Activated CD8-positive, alpha-beta memory T cell treated with anti-CD3 and anti-CD28 coated beads, Interleukin-2, amount 10 ng/mL, durations not matched to agents 7 days and 5 days (primary cell): ENCODE measurements at regions of chr10 and their contacts with region 1.

Region 1: GRCh38 chr10:67849331-67850011 is 11.5 kb upstream of the DNAJC12 start:
- DNase-seq: peak; percentile 98
- ATAC-seq: peak; percentile 99
- H3K4me3 Mint-ChIP-seq: peak overlapping the region; percentile 91
- H3K27ac Mint-ChIP-seq: peak overlapping the region; percentile 97
- H3K4me1 Mint-ChIP-seq: peaks cover 11% of the 10 kb centered on the region
- H3K27me3 Mint-ChIP-seq: no peaks in the 10 kb centered on the region

Region 2: DNA sequence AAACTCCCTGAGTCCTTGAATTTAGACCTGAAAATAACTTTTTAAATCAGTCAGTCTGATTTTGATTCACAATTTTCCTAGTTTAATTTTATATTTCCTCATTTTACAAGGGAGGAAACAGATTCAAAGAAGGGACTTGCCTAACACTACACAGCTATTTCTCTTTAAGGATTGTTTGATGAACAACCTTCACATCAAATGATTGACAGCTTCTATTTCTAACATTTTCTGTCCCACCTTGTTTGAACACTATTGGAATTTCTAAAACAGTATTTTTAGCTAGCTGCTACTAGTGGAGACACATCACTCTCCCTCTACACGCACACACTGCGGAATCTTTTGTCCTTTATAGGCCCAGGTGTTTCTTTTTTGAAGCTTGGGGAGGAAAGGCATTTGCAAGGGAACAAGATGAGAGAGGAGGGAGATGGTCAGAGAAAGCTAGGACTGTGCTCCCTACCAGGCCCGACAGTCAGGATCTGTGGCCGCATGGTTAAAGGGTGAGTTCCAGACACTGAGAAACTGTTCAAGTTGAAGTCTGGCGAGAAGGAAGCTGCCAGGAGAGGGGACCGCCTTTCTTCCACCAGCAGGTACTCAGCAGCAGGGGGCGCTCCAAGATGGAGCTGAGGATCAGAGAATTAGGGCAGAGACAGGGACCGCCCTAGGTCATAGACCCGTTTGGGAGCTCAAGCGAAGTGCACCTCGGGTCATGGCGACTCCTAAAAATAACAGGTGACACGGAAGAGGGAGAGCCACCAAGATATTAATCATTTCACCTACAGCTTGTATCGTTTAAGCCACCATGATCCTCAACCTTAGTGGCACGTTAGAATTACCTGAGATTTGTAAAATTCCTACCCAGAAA is 61.2 kb before region 1 on chr10:
- CTCF ChIA-PET with region 1: interaction called, 37 read pairs
- DNase-seq: peak; percentile 87
- ATAC-seq: peak; percentile 67
- H3K4me3 Mint-ChIP-seq: peak overlapping the region; percentile 5
- H3K27ac Mint-ChIP-seq: peak overlapping the region; percentile 1
- H3K4me1 Mint-ChIP-seq: peaks cover 55% of the 10 kb centered on the region
- H3K27me3 Mint-ChIP-seq: no peaks in the 10 kb centered on the region

Region 3: GRCh38 chr10:67818320-67818719 is 31.2 kb before region 1 on chr10:
- CTCF ChIA-PET with region 1: no interaction called
- DNase-seq: no peak
- ATAC-seq: no peak
- H3K4me3 Mint-ChIP-seq: no peak overlapping the region
- H3K27ac Mint-ChIP-seq: no peak overlapping the region
- H3K4me1 Mint-ChIP-seq: peaks cover 28% of the 10 kb centered on the region
- H3K27me3 Mint-ChIP-seq: no peaks in the 10 kb centered on the region

Region 4: GRCh38 chr10:67861750-67862460 is 12.4 kb after region 1 on chr10:
- CTCF ChIA-PET with region 1: interaction called, 12 read pairs
- DNase-seq: no peak
- ATAC-seq: no peak
- H3K4me3 Mint-ChIP-seq: no peak overlapping the region
- H3K27ac Mint-ChIP-seq: no peak overlapping the region
- H3K4me1 Mint-ChIP-seq: no peaks in the 10 kb centered on the region
- H3K27me3 Mint-ChIP-seq: no peaks in the 10 kb centered on the region

Region 5: GRCh38 chr10:67884313-67884841 is 34.9 kb after region 1 on chr10 and contains the start of gene SIRT1:
- CTCF ChIA-PET with region 1: interaction called, 31 read pairs
- DNase-seq: peak; percentile 93
- ATAC-seq: peak; percentile 82
- H3K4me3 Mint-ChIP-seq: peak within 1 kb of the TSS; percentile 94
- H3K27ac Mint-ChIP-seq: peak within 1 kb of the TSS; percentile 91
- H3K4me1 Mint-ChIP-seq: peaks cover 30% of the 10 kb centered on the region
- H3K27me3 Mint-ChIP-seq: no peaks in the 10 kb centered on the region
- total RNA-seq, gene SIRT1: 20.7 to 23.4 TPM

Region 6: DNA sequence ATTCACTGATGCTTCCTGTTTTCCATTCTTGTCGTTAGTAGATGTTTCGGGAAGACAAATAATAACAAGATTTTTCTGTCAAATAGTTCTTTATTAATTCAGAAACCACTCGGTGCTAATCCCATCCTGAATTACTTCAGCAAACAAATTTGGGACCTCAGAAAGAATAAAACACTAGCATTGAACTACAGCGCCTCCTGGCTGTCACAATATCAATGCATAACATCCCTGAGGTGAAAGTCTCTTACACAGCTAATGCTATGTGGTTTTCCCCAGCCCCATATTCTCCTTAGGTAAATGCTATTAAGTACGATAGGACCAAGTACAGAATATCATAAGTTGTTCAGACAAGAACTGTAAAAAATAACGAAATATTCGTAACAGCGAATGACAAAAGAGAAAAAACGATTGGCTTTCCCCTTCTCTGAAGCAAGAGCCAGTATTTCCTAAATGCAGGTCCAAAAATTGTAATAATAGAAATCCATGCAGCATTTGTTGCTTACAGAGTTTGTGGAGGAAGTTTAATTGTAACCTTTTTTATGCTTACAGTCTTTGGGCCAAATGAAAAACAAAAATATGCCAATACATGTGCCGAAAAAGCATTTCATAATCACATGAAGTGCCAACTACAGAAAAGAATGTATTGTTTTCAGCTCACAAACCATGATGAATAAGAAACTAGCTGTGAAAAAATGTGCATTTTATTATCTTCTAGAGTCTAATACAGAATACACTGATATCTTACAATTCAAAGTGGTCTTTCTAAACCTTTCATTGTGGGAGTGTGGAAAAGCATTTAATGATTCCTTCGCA is 307.1 kb after region 1 on chr10:
- CTCF ChIA-PET with region 1: interaction called, 98 read pairs
- DNase-seq: peak; percentile 71
- ATAC-seq: no peak
- H3K4me3 Mint-ChIP-seq: no peak overlapping the region
- H3K27ac Mint-ChIP-seq: no peak overlapping the region
- H3K4me1 Mint-ChIP-seq: peaks cover 4% of the 10 kb centered on the region
- H3K27me3 Mint-ChIP-seq: peaks cover 2% of the 10 kb centered on the region

Region 7: DNA sequence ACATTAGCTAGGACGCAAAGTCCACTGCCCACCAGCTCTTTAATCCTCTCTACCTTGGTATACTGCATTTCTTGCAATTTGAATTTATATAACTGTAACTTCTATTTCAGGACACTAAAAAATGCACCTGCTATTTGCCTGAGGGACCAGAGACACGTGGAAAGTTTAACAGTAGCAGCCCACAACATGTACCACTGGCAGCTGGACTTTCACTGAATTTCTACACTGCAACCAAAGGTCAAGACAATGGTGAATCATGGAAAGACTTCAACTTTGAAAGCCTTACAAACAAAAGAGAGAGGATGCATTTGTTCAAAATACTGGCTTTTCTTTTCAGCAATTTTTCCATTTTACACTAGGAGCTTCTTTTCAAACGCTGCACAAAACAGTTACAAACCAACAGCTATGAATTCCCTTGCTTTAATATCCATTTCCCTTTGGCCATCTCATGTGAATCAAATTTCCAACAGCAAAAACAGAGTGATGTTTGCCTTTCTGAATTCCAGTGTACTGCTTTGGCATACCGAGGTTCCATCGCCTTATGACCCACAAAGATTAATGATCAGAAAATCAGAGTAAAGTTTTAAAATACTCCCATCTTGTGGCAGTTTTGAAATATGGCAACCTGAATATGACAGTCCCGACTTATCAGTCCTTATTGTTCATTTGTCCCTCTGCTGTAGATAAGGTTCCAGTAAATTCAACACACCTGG is 452.5 kb after region 1 on chr10:
- CTCF ChIA-PET with region 1: interaction called, 14 read pairs
- DNase-seq: no peak
- ATAC-seq: peak; percentile 58
- H3K4me3 Mint-ChIP-seq: no peak overlapping the region
- H3K27ac Mint-ChIP-seq: no peak overlapping the region
- H3K4me1 Mint-ChIP-seq: no peaks in the 10 kb centered on the region
- H3K27me3 Mint-ChIP-seq: no peaks in the 10 kb centered on the region